Right cardiac atrium (tissue), 5 donors: ENCODE measurements at regions of chr13 and their contacts with region 1.

Region 1: GRCh38 chr13:23561261-23561660 is 9.0 kb upstream of the TNFRSF19 start:
- DNase-seq: no peak
- ATAC-seq: no peak
- H3K4me3 ChIP-seq: no peak overlapping the region
- H3K27ac ChIP-seq: no peak overlapping the region
- H3K4me1 ChIP-seq: peaks cover 8% of the 10 kb centered on the region
- H3K27me3 ChIP-seq: no peaks in the 10 kb centered on the region

Region 2: GRCh38 chr13:23399347-23399746 is 161.9 kb before region 1 on chr13:
- intact Hi-C with region 1: no loop called
- DNase-seq: no peak
- ATAC-seq: no peak
- H3K4me3 ChIP-seq: no peak overlapping the region
- H3K27ac ChIP-seq: no peak overlapping the region
- H3K4me1 ChIP-seq: no peaks in the 10 kb centered on the region
- H3K27me3 ChIP-seq: no peaks in the 10 kb centered on the region

Region 3: DNA sequence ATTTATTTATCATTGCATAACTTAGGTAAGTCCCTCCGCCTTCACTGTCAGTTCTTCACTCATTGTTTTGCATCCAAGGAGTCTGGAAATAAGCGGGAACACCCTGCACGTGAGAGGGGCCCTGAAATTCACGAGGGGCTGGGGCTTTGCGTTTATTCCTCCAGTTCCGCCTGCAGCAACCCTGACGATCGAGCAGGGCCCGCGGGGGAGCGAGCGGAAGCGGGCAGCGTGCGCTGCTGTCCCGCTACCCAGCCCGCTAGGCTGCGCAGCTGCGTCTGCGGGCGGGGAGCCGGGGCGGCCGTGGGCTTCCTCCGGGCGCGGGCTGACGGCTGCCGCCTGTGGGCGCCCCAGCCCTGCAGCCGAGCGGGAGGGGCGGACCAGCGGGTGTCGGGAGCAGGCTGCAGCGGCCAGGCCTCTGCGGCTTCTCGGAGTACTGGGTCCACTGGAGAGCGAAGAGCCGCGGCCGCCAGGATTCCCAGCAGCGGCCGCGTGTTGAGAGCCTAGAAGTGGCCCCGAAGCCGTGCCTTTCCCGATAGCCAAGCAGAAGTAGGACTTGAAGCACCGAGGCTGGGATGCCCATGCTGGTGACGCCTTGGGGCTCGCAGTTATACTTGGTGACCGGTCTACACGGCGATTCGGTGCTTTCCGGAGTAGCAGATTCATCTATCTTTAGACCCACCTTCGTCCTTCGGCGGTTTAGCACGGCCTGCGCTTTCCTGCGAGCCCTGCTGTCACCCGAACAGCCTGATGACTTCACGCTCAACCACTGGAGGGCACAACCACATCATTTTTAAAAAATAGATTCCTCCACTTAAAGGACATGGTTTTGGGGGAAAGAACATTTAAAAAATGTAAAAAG is 94.9 kb before region 1 on chr13:
- intact Hi-C with region 1: loop called in 2 of 4 experiments (anchors 5 to 10 kb)
- DNase-seq: peak; percentile 73 to 88 (median 85)
- ATAC-seq: peak; percentile 94 to 95
- H3K4me3 ChIP-seq: peak overlapping the region; percentile 12
- H3K27ac ChIP-seq: peak overlapping the region; percentile 33
- H3K4me1 ChIP-seq: peaks cover 2% of the 10 kb centered on the region
- H3K27me3 ChIP-seq: no peaks in the 10 kb centered on the region

Region 4: DNA sequence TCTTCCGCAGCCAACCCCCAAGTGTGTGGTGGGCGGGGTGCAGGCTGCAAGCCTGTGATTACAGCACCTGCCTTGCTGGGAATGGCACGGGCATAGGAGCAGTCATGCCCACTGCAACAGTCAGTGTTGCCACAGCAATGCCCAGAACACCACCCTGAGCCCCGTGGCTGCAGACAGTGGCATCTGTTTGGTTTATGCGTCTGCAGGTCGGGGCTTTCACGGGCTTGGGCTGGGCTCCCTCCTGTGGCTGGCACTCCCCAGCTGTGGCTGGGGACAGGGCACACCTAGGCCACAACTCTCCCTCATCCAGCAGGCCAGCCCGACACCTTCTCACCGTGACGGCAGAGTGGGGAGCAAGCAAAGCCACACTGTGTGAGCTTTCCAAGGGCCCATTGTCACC is 451.4 kb after region 1 on chr13:
- intact Hi-C with region 1: no loop called
- DNase-seq: no peak
- ATAC-seq: no peak
- H3K4me3 ChIP-seq: no peak overlapping the region
- H3K27ac ChIP-seq: no peak overlapping the region
- H3K4me1 ChIP-seq: no peaks in the 10 kb centered on the region
- H3K27me3 ChIP-seq: no peaks in the 10 kb centered on the region